Motor neuron (in vitro differentiated cells): ENCODE measurements at regions of chr12 and their contacts with region 1.

Region 1: DNA sequence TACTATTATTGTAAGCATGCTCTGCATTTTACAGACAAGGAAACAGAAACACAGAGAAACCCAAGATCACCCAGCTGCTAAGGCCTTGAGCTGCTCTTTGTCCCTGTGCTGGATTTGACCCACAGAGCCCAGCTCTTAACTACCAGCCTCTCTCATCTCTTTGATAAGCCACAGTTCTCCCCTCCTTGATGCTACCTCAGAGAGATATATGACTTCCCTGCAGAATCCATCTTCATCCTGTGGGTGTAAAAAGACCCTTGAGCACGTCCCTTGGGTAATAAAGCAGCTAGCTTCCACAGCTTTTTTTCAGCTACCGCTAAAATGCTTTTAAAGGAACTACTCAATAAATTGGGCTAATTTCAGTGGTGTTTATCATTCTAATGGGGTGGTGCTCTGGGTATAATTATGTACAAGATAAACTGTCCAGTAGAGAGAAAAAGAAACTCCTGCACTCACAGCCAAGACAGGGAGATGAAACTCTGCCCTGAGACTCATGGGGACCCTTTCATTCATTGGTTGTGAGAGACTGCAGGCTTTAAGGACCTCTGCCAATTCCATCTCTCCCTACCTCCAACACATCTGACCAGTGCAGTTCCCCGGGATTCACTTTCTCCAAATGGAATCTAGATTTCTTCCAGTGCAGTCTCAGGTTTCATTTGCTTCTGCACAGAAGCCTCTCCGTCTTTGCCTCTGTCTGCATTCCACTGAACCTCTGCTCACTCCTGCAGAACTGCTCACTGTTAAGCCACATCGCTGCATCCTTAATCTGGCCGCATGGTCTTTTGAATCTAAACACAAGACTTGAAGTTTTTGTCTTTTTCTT is 24.7 kb upstream of the NTF3 start:
- ATAC-seq: peak in 6 of 8 experiments; percentile 56 to 96 (median 82)
- H3K4me3 ChIP-seq: no peak overlapping the region
- H3K27ac ChIP-seq: no peak overlapping the region
- H3K4me1 ChIP-seq: peaks cover 0 to 18% of the 10 kb centered on the region in 2 donors

Region 2: GRCh38 chr12:5200278-5201087 is 206.8 kb before region 1 on chr12:
- in situ Hi-C with region 1: loop called in 1 of 9 experiments (anchors 25 kb)
- ATAC-seq: peak; percentile 49 to 86 (median 54)
- H3K4me3 ChIP-seq: no peak overlapping the region
- H3K27ac ChIP-seq: peak overlapping the region; percentile 84 to 89
- H3K4me1 ChIP-seq: peaks cover 39 to 42% of the 10 kb centered on the region in 2 donors